ENCODE measurements at regions of chr3 and their contacts with region 1.

Region 1: DNA sequence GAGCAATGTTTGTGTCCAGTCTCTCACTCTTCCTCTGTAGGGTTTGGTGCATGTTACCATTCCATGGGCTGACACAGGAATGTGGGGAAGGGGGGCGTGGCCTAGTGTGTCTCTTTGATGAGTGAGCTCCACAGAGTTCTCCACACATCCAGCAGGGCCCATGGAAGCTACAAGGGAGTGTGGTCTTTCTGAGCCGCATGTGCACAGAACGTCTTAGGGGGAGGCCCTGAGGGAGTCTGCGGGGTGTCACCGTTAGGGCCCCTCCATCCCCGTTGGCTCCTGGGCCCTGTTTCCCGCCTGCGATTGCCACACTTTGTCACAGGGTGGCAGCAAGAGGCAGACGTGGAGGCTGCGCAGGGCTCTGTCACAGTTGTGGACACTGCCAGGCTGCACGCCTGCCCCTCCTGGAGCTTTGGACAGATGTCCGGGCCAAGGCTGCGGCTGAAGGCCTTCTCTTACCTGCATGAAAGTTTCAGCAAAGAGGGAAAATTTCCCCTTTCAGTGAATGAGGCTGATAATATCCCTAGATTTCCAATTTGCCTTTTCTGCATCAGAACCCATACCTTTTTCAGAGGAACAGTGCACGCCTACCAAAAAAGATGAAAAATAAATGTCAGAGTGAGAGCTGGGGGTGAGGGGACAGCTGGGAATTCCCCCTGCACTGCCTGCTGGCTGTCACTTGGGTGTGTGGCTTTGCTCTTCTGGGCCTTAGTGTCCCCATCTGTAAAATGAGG is 24.3 kb downstream of the CACNA2D3 start:
- DNase-seq: peak; percentile 31 to 63
- ATAC-seq: peak; percentile 82 to 93 (median 92)
- H3K4me3 ChIP-seq: no peak overlapping the region
- H3K27ac ChIP-seq: no peak overlapping the region
- H3K4me1 ChIP-seq: peaks cover 0 to 15% (median 0%) of the 10 kb centered on the region in 9 donors
- H3K27me3 ChIP-seq: no peaks in the 10 kb centered on the region
- CTCF ChIP-seq: peak; percentile 42 to 76 (median 70)

Region 2: DNA sequence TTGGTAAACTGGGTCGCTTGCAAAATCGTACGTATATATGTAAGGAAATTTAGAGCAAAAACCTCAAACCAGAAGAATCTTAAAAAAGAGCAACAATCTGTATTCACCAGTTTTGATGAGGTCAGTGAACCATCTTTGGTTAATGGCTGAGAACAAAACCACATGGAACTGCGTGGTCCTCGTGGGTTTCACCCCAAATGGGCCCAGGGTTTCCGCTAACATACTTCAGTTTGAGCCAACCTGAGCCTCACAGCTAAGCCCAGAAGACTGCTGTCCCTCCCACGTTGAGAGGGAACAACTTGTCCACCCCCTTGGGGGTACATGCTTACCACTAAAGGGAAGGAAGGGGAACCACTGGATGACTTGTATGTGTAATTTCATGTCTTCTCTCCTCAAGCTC is 180.3 kb after region 1 on chr3:
- intact Hi-C with region 1: no loop called
- DNase-seq: no peak
- ATAC-seq: no peak
- H3K4me3 ChIP-seq: no peak overlapping the region
- H3K27ac ChIP-seq: no peak overlapping the region
- H3K4me1 ChIP-seq: no peaks in the 10 kb centered on the region
- H3K27me3 ChIP-seq: peaks cover 0 to 3% (median 0%) of the 10 kb centered on the region in 7 donors
- CTCF ChIP-seq: no peak

Region 3: GRCh38 chr3:54374214-54374855 is 227.7 kb after region 1 on chr3:
- intact Hi-C with region 1: loop called in 8 of 10 experiments (anchors 5 to 10 kb)
- DNase-seq: no peak
- ATAC-seq: peak in 3 of 8 donors; percentile 58 to 61 (median 58)
- H3K4me3 ChIP-seq: no peak overlapping the region
- H3K27ac ChIP-seq: no peak overlapping the region
- H3K4me1 ChIP-seq: peaks cover 0 to 14% (median 7%) of the 10 kb centered on the region in 9 donors
- H3K27me3 ChIP-seq: no peaks in the 10 kb centered on the region
- CTCF ChIP-seq: peak; percentile 11 to 61 (median 43)

Region 4: DNA sequence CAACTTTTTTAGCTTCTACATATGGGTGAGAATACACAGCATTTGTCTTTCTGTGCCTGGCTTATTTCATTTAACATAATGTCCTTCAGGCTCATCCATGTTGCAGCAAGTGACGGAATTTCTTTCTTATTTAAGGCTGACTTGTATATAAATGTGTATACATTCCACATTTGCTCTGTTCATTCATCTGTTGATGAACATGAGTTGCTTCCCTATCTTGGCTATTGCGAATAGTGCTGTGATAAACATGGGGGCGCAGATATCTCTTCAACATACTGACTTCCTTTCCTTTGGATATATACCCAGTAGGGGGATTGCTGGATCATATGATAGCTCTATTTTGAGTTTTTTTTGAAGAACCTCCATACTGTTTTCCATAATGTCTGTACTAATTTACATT is 308.1 kb after region 1 on chr3:
- intact Hi-C with region 1: no loop called
- DNase-seq: no peak
- ATAC-seq: no peak
- H3K4me3 ChIP-seq: no peak overlapping the region
- H3K27ac ChIP-seq: no peak overlapping the region
- H3K4me1 ChIP-seq: no peaks in the 10 kb centered on the region
- H3K27me3 ChIP-seq: no peaks in the 10 kb centered on the region
- CTCF ChIP-seq: no peak

Measured in heart right ventricle (tissue), 16 donors.